Right cardiac atrium (tissue), 5 donors: ENCODE measurements at regions of chr1 and their contacts with region 1.

Region 1: DNA sequence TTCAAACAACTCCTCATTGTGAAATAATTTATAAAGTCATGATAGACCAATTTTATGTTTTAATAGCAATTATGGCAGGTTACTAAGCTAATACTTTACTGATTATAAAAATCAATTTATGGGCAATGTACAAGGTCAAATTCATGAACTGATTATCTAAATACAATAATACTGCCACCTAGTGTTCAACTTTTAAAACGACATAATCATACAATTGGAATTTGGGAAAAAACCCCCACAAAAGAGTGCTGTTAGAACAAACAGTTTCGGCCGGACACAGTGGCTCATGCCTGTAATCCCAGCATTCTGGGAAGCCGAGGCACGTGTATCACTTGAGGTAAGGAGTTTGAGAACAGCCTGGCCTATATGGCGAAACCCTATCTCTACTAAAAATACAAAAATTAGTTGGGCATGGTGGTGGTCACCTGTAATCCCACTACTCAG is 14.0 kb downstream of the GTF2B start:
- DNase-seq: no peak
- ATAC-seq: no peak
- H3K4me3 ChIP-seq: no peak overlapping the region
- H3K27ac ChIP-seq: no peak overlapping the region
- H3K4me1 ChIP-seq: no peaks in the 10 kb centered on the region
- H3K27me3 ChIP-seq: no peaks in the 10 kb centered on the region

Region 2: GRCh38 chr1:88655685-88656299 is 221.6 kb before region 1 on chr1:
- intact Hi-C with region 1: loop called in 2 of 4 experiments (anchors 10 kb)
- DNase-seq: no peak
- ATAC-seq: no peak
- H3K4me3 ChIP-seq: no peak overlapping the region
- H3K27ac ChIP-seq: no peak overlapping the region
- H3K4me1 ChIP-seq: no peaks in the 10 kb centered on the region
- H3K27me3 ChIP-seq: no peaks in the 10 kb centered on the region